Dendritic cell treated with granulocyte-macrophage colony-stimulating factor and Interleukin-4, amounts not matched to agents 40 ng/mL and 50 ng/mL, for 4 days (primary cell): ENCODE measurements at regions of chr14 and their contacts with region 1.

Region 1: GRCh38 chr14:24036169-24036962 is 15.4 kb upstream of the CARMIL3 start:
- H3K4me3 Mint-ChIP-seq: peak overlapping the region; percentile 90
- H3K27ac Mint-ChIP-seq: peak overlapping the region; percentile 97
- H3K4me1 Mint-ChIP-seq: peaks cover 65% of the 10 kb centered on the region
- H3K27me3 Mint-ChIP-seq: no peaks in the 10 kb centered on the region

Region 2: DNA sequence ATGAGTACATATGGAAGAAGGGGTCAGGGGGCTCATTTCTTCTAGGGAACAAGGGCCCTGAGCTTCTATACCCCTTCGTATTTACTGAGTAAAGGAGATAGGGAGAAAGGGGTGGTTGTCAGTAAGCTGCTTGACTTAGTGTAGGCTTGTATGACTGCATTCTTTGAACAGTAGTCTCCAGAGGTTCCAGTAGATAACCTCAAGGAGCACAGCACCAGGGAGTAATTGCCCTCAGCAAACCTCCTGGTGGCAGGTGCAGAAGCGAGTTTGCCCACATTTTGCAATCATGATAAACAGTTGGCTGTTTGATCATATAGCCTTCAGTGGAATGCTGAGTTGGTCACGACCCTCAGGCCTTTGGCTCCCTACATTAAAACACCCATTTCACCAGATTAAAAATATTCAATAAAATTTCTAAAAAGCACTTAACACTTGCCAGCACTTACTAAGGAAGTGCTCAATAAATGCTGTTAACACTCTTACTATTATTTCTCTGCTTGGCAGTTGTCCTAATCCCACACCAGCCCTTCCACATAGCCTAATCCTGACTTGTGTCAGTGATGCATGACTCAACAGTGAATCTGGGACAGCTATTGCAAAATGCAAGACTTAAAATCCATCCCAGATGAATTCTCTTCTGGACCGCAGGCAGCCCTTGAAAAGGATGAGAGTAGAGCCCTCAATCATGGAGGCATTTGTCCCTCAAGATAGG is 51.3 kb before region 1 on chr14:
- intact Hi-C with region 1: loop called (anchors 5 kb)
- H3K4me3 Mint-ChIP-seq: no peak overlapping the region
- H3K27ac Mint-ChIP-seq: peak overlapping the region; percentile 95
- H3K4me1 Mint-ChIP-seq: peaks cover 83% of the 10 kb centered on the region
- H3K27me3 Mint-ChIP-seq: no peaks in the 10 kb centered on the region

Region 3: DNA sequence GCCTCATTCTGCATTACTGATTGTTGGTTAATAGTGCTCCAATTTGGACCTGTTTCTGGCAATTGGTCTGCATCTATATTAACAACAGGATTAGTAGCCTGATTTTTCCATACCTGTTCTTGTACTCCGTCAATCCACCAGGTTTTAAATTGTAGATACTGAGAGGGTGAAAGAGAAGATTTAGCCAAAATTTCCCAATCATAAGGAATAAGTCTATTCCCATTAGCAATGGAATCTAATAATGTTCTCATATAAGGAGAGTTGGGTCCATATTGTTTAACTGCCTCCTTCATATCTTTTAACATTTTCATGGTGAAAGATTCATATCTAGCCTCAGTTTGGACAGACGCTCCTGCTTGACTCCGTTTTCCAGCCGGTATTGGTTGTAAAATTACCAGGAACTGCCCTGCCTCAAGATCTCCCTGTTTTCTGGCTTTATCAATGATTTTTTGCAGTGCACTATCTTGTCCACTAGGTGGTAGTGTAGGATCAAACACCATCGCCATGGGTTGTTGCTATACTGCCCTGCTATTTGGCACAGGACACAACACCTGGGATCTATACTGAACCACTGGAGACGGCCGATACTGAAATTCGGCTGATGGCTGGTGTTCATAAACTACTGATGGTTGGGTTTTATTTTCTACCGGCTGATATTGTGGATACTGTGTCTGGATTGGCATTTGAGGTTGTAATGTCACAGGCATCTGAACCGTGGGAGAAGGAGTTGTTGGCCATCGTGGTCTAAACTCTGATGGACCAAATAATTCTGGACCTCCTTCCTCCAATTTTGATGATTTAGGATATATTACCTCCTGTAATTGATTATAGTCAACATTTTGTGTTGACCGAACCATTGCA is 22.5 kb before region 1 on chr14:
- intact Hi-C with region 1: loop called (anchors 1 kb)
- H3K4me3 Mint-ChIP-seq: no peak overlapping the region
- H3K27ac Mint-ChIP-seq: no peak overlapping the region
- H3K4me1 Mint-ChIP-seq: peaks cover 48% of the 10 kb centered on the region
- H3K27me3 Mint-ChIP-seq: no peaks in the 10 kb centered on the region